Calu3 (cell line): ENCODE measurements at regions of chr1 and their contacts with region 1.

Region 1: GRCh38 chr1:180482425-180483275 is 19.7 kb downstream of the ACBD6 start:
- DNase-seq: peak; percentile 44
- H3K4me3 Mint-ChIP-seq: no peak overlapping the region
- H3K27ac Mint-ChIP-seq: no peak overlapping the region
- H3K4me1 Mint-ChIP-seq: peaks cover 12% of the 10 kb centered on the region
- H3K27me3 Mint-ChIP-seq: no peaks in the 10 kb centered on the region
- CTCF ChIP-seq: peak; percentile 67

Region 2: GRCh38 chr1:180188091-180188506 is 294.6 kb before region 1 on chr1:
- CTCF ChIA-PET with region 1: interaction called, 5 read pairs
- intact Hi-C with region 1: loop called (anchors 1 kb)
- DNase-seq: peak; percentile 79
- H3K4me3 Mint-ChIP-seq: no peak overlapping the region
- H3K27ac Mint-ChIP-seq: no peak overlapping the region
- H3K4me1 Mint-ChIP-seq: peaks cover 12% of the 10 kb centered on the region
- H3K27me3 Mint-ChIP-seq: no peaks in the 10 kb centered on the region
- CTCF ChIP-seq: peak; percentile 84

Region 3: DNA sequence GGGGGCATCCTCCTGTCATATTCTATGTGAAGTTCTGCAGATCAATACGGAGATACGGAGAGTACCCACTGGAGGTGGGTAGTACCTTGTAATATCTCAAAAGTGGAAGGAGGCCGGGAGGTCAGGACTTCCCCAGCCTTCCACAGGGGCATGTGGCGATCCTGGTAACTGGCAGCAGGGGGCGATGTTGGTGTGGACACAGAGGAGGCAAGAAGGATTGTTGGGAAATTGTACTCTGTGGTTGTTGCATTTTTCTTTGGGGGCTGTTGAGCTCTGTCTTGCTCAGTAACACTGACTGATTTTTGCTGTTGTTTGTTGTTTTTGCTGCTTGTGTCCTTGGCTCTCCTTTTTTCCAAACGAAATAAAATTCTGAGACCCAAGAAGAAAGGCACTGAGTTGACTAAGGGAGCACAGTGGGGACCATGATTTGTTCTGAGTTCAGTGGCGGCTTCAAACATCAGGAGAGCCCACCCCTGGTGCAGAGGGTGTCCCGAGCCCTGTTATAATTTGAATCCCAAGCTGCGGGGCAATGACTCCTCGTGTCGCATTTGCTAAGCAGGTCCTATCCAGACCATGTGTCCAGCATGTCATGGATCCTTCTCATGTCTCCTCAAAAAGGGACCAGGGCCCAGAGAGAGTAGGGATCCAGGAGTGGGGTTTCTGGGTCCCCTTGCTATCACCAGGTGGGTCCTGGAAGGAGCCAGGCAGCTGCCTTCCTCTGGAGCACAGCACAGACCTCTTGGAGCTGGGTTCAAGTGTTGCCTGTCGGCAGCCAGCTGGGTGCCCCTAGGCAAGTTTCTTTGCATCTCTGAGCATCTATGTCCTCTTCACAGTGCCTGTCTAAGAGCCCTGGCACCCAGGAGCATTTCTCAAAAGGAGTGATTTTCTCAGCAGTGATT is 229.8 kb before region 1 on chr1:
- CTCF ChIA-PET with region 1: no interaction called
- intact Hi-C with region 1: loop called (anchors 1 kb)
- DNase-seq: peak; percentile 90
- H3K4me3 Mint-ChIP-seq: no peak overlapping the region
- H3K27ac Mint-ChIP-seq: no peak overlapping the region
- H3K4me1 Mint-ChIP-seq: no peaks in the 10 kb centered on the region
- H3K27me3 Mint-ChIP-seq: peaks cover 20% of the 10 kb centered on the region
- CTCF ChIP-seq: peak; percentile 94

Region 4: DNA sequence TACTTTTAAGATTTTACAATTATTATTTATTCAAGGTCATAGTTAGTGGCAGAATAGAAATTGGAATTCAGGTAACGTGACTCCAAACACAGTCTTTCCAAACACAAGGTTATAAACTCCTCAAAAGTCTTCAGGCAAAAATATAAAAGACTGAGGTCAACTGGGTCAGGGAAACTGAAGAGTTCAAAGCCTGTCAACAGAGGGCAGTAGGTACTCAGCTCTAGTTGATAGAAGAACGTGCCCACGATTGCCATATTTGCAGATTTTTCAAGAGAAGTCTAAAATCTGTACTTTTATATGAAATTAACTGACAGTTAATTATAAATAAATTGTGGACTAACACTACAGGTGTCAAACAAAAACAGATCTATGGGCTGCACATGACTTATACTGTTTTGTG is 117.6 kb before region 1 on chr1:
- CTCF ChIA-PET with region 1: no interaction called
- intact Hi-C with region 1: loop called (anchors 2 kb)
- DNase-seq: peak; percentile 20
- H3K4me3 Mint-ChIP-seq: no peak overlapping the region
- H3K27ac Mint-ChIP-seq: no peak overlapping the region
- H3K4me1 Mint-ChIP-seq: peaks cover 12% of the 10 kb centered on the region
- H3K27me3 Mint-ChIP-seq: no peaks in the 10 kb centered on the region
- CTCF ChIP-seq: no peak